Body of pancreas (tissue), 4 donors: ENCODE measurements at regions of chr7 and their contacts with region 1.

Region 1: DNA sequence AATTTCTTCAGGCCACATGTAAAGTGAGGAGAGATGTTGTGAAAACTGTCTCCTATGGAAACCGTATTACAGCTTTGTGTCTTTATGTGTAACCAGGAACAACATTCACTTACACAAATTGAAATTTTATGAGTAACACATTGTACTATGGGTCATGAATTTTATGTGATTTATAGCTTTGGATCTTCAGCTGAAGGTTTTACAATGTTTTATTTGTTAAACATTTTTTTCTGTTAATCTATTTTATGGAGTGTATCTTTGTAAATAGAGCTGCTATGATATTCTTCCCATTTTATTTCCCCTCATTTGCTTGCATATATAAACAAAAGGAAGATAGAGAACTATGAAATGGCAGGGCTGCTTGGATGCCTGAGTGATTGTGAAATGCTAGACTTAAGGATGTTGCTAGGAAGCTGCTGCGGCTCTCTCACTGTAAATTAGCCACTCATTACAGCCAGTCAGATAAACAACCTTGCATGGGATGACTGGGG is 104.5 kb upstream of the PCLO start:
- DNase-seq: no peak
- ATAC-seq: no peak
- H3K4me3 ChIP-seq: no peak overlapping the region
- H3K27ac ChIP-seq: no peak overlapping the region
- H3K4me1 ChIP-seq: no peaks in the 10 kb centered on the region
- H3K27me3 ChIP-seq: no peaks in the 10 kb centered on the region
- CTCF ChIP-seq: no peak
- POLR2A ChIP-seq: no peak

Region 2: GRCh38 chr7:82810558-82811259 is 456.5 kb before region 1 on chr7:
- intact Hi-C with region 1: loop called (anchors 10 kb)
- DNase-seq: peak; percentile 20 to 39 (median 24)
- ATAC-seq: peak; percentile 70
- H3K4me3 ChIP-seq: no peak overlapping the region
- H3K27ac ChIP-seq: no peak overlapping the region
- H3K4me1 ChIP-seq: no peaks in the 10 kb centered on the region
- H3K27me3 ChIP-seq: no peaks in the 10 kb centered on the region
- CTCF ChIP-seq: peak; percentile 31 to 71 (median 57)
- POLR2A ChIP-seq: no peak